ENCODE measurements at regions of chr15 and their contacts with region 1.

Region 1: DNA sequence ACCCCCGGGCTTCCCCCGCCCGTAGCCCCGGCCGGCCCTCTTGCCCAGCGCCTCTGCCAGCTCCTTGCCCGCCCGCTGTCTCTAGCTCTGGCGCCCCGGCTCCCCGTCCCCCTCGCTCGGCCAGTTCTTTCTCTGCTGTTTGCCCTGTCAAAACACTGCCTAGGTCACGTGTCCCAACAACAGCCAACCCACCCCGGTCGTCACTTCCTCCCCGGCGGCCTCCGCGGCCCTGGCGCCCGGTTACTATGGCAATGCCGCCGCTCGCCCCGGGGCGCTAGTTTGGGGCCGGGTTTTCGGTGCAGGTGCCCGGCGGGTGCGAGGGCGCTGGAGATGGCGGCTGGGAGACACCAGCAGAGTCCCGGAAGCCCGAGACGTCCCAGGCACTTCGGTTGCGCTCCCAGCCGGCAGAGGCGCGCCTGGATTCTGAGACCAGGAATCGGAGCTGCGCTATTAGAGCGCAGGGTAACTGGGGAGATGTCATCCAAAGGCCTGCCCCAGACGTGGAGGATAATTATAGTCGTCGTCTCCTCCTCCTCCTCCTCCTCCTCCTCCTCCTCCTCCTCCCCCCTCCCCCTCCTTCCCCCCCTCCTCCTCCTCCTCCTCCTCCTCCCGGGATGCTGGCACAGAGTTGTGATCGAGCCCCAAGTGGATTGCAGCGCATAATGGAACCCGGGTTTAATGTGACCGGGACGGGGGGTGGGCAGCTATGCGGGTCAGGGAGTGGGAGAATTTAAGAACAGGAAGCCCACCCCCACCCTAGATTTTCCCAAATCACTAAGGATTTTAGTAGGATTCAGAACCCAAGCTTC is at the start of gene ATOSA:
- DNase-seq: peak; percentile 84 to 95 (median 93)
- ATAC-seq: peak; percentile 62
- H3K4me3 ChIP-seq: peak within 1 kb of the TSS; percentile 86 to 93
- H3K4me3 Mint-ChIP-seq: peak within 1 kb of the TSS; percentile 99
- H3K27ac ChIP-seq: peak within 1 kb of the TSS; percentile 97 to 98
- H3K27ac Mint-ChIP-seq: peak within 1 kb of the TSS; percentile 100
- H3K4me1 ChIP-seq: peaks cover 51% of the 10 kb centered on the region
- H3K4me1 Mint-ChIP-seq: peaks cover 57% of the 10 kb centered on the region
- H3K27me3 ChIP-seq: no peaks in the 10 kb centered on the region
- H3K27me3 Mint-ChIP-seq: no peaks in the 10 kb centered on the region
- CTCF ChIP-seq: no peak
- total RNA-seq, gene ATOSA: 133 to 134 TPM

Region 2: DNA sequence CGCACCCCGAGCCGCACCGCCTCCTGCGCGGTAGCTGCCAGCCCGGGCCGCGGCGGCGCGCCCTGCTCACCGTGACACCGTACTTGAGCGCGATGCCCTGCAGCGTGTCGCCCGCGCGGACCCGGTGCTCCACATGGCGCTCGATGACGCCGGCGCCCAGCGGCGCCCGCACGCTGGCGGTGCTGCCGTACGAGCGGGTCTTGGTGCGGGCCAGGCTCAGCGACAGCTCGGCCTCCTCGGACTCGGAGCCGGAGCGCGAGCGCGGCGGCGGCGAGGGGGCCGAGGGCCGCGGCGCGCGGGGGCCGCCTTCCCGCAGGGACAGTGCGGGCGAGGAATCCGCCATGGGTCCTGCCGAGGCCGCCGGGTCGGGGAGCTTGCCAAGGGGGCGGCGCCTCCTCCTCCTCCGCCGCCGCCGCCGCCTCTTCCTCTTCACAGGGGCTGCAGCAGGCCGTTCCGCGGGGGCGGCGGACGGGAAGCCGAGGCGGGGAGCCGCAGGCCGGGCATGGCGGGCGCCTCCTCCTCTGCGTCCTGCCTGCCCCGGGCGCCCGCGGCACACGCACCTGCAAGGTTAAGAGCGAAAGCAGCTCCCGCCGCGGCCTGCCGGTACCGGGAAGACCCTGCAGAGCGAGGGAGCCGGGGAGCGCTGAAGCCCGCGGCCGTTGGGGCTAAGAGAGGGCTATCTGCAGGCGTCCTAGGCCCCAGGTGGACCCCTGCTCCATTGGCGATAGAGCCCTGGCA is 942.0 kb before region 1 on chr15 and contains the start of gene LYSMD2:
- CTCF ChIA-PET with region 1: no interaction called
- POLR2A ChIA-PET with region 1: no interaction called
- intact Hi-C with region 1: loop called (anchors 10 kb)
- DNase-seq: peak; percentile 30 to 85 (median 71)
- ATAC-seq: peak; percentile 51
- H3K4me3 ChIP-seq: peak within 1 kb of the TSS; percentile 62 to 70
- H3K4me3 Mint-ChIP-seq: peak within 1 kb of the TSS; percentile 91
- H3K27ac ChIP-seq: peak within 1 kb of the TSS; percentile 66 to 92
- H3K27ac Mint-ChIP-seq: peak within 1 kb of the TSS; percentile 99
- H3K4me1 ChIP-seq: peaks cover 43% of the 10 kb centered on the region
- H3K4me1 Mint-ChIP-seq: peaks cover 55% of the 10 kb centered on the region
- H3K27me3 ChIP-seq: no peaks in the 10 kb centered on the region
- H3K27me3 Mint-ChIP-seq: no peaks in the 10 kb centered on the region
- CTCF ChIP-seq: no peak
- total RNA-seq, gene LYSMD2: 18.9 to 20.0 TPM

Region 3: DNA sequence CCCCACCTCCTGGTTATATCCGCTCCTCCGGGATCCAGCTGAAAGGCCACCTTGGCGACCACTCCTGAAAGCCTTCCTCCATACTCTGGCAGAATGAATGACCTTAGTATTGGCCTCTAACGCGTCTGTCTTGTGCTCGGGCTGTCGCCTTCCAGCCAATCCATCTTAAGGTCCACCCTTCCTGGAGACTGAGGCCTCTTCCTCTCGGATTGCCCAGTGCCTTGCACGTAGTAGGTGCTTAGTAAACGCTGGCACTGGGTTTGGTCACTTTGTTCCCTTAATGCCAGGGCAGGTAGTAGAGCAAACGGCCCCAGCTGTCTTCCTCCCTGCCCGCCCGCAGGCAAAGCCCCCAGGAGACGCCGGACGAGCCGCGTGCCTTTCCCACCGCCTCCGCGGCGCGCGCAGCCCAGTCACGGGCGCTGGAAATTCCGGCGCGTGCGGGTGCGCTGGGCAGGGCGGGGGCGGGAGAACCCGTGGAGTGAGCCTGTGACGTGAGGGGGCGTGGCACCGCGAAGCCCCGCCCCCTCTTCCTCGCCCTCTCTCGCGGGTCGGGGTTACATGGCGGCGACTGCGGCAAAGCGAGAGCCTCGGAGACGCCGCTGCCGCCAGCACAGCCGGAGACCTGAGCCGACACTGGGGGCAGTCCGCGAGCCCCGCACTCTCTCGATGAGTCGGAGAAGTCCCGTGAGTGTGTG is 660.6 kb before region 1 on chr15 and contains the start of gene MAPK6:
- CTCF ChIA-PET with region 1: no interaction called
- POLR2A ChIA-PET with region 1: no interaction called
- intact Hi-C with region 1: loop called in 1 of 2 experiments (anchors 5 kb)
- DNase-seq: peak; percentile 89 to 98 (median 92)
- ATAC-seq: peak; percentile 87
- H3K4me3 ChIP-seq: peak within 1 kb of the TSS; percentile 74 to 84
- H3K4me3 Mint-ChIP-seq: peak within 1 kb of the TSS; percentile 97
- H3K27ac ChIP-seq: peak within 1 kb of the TSS; percentile 74 to 84
- H3K27ac Mint-ChIP-seq: peak within 1 kb of the TSS; percentile 99
- H3K4me1 ChIP-seq: peaks cover 29% of the 10 kb centered on the region
- H3K4me1 Mint-ChIP-seq: peaks cover 35% of the 10 kb centered on the region
- H3K27me3 ChIP-seq: no peaks in the 10 kb centered on the region
- H3K27me3 Mint-ChIP-seq: no peaks in the 10 kb centered on the region
- CTCF ChIP-seq: no peak
- total RNA-seq, gene MAPK6: 39.8 to 42.5 TPM

Region 4: GRCh38 chr15:52331490-52332240 is 347.8 kb before region 1 on chr15:
- CTCF ChIA-PET with region 1: interaction called, 3 read pairs
- POLR2A ChIA-PET with region 1: interaction called, 3 read pairs
- intact Hi-C with region 1: loop called in 1 of 2 experiments (anchors 1 kb)
- DNase-seq: peak in 8 of 9 experiments; percentile 25 to 84 (median 44)
- ATAC-seq: peak; percentile 99
- H3K4me3 ChIP-seq: no peak overlapping the region
- H3K4me3 Mint-ChIP-seq: no peak overlapping the region
- H3K27ac ChIP-seq: peak overlapping the region in 1 of 2 experiments; percentile 14
- H3K27ac Mint-ChIP-seq: peak overlapping the region; percentile 45
- H3K4me1 ChIP-seq: peaks cover 10% of the 10 kb centered on the region
- H3K4me1 Mint-ChIP-seq: peaks cover 12% of the 10 kb centered on the region
- H3K27me3 ChIP-seq: no peaks in the 10 kb centered on the region
- H3K27me3 Mint-ChIP-seq: no peaks in the 10 kb centered on the region
- CTCF ChIP-seq: peak; percentile 63

Region 5: GRCh38 chr15:52528991-52529926 is 150.2 kb before region 1 on chr15:
- CTCF ChIA-PET with region 1: no interaction called
- POLR2A ChIA-PET with region 1: no interaction called
- intact Hi-C with region 1: loop called in 1 of 2 experiments (anchors 1 kb)
- DNase-seq: peak; percentile 59 to 92 (median 80)
- ATAC-seq: peak; percentile 86
- H3K4me3 ChIP-seq: peak overlapping the region; percentile 49 to 51
- H3K4me3 Mint-ChIP-seq: peak overlapping the region; percentile 84
- H3K27ac ChIP-seq: peak overlapping the region; percentile 61 to 78
- H3K27ac Mint-ChIP-seq: peak overlapping the region; percentile 87
- H3K4me1 ChIP-seq: peaks cover 14% of the 10 kb centered on the region
- H3K4me1 Mint-ChIP-seq: peaks cover 33% of the 10 kb centered on the region
- H3K27me3 ChIP-seq: no peaks in the 10 kb centered on the region
- H3K27me3 Mint-ChIP-seq: no peaks in the 10 kb centered on the region
- CTCF ChIP-seq: no peak

Region 6: DNA sequence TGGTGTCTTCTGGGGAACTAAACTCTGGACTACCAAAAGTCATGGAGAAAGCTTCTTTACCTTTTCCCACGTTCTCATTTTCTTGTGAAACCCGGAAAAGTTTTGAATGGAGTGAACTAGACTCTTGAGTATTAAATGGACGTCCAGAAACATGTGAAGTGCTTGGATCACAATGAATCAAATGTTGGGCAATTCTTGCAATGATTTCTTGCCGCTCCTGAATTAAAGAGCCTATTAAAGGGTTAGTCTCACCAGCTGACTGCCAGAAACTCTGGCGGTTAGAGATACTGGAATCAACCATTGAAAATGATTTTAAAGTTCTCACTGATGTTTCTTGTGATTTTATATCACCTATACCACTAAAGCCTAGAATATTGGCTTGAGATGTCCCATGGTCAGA is 69.8 kb before region 1 on chr15:
- CTCF ChIA-PET with region 1: interaction called, 3 read pairs
- POLR2A ChIA-PET with region 1: no interaction called
- intact Hi-C with region 1: loop called in 1 of 2 experiments (anchors 10 kb)
- DNase-seq: no peak
- ATAC-seq: no peak
- H3K4me3 ChIP-seq: no peak overlapping the region
- H3K4me3 Mint-ChIP-seq: no peak overlapping the region
- H3K27ac ChIP-seq: no peak overlapping the region
- H3K27ac Mint-ChIP-seq: no peak overlapping the region
- H3K4me1 ChIP-seq: no peaks in the 10 kb centered on the region
- H3K4me1 Mint-ChIP-seq: no peaks in the 10 kb centered on the region
- H3K27me3 ChIP-seq: no peaks in the 10 kb centered on the region
- H3K27me3 Mint-ChIP-seq: no peaks in the 10 kb centered on the region
- CTCF ChIP-seq: no peak

Region 7: GRCh38 chr15:52663536-52664294 is 15.7 kb before region 1 on chr15:
- CTCF ChIA-PET with region 1: interaction called, 4 read pairs
- POLR2A ChIA-PET with region 1: interaction called, 3 read pairs
- intact Hi-C with region 1: loop called in 1 of 2 experiments (anchors 2 kb)
- DNase-seq: no peak
- ATAC-seq: no peak
- H3K4me3 ChIP-seq: no peak overlapping the region
- H3K4me3 Mint-ChIP-seq: no peak overlapping the region
- H3K27ac ChIP-seq: no peak overlapping the region
- H3K27ac Mint-ChIP-seq: no peak overlapping the region
- H3K4me1 ChIP-seq: peaks cover 5% of the 10 kb centered on the region
- H3K4me1 Mint-ChIP-seq: peaks cover 45% of the 10 kb centered on the region
- H3K27me3 ChIP-seq: no peaks in the 10 kb centered on the region
- H3K27me3 Mint-ChIP-seq: no peaks in the 10 kb centered on the region
- CTCF ChIP-seq: no peak

Measured in CD8-positive, alpha-beta T cell (primary cell).